AG04449 (cell line): ENCODE measurements at regions of chr19 and their contacts with region 1.

Region 1: DNA sequence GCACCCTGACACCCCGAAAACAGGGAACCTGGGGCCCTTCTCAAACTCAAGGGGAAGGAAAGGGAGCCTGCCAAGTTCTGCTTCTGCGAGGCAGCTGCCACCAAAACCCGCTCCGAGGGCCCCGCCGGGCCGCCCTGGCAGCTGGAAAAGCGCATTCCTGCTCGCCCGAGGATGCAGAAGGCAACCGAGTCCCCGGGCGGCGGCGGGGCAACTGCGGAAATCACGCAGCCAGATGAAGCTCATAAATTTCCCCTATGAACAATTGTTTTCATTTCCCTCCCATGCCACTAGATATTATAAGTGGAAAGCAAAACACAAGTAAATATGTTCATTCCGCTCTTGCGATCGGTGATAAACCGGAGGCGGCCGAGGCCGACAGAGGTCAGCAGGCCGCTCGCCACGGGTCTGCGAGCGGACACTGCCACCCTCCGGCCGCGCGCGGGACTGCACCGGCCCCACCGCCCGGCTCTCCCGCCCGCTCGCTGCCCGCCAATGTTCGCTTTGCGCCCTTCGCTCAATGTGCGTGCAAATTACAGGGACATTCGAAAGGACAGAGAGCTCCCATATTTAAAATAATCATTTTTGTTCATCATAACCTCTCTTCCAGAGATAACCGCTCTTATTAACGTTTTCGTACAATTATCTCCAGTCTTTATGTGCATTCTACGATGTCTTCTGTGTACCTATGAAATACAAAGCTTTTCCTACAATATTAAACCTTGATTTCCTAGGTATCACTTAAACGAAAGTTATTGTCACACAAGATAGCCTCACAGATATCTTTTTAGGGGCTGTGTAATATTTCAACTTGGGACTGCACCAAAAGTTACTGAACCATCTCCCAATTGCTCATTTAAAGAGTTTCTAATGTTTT is 120.8 kb upstream of the ZNF507 start:
- DNase-seq: no peak
- H3K4me3 ChIP-seq: peak overlapping the region; percentile 32
- CTCF ChIP-seq: peak; percentile 87

Region 2: DNA sequence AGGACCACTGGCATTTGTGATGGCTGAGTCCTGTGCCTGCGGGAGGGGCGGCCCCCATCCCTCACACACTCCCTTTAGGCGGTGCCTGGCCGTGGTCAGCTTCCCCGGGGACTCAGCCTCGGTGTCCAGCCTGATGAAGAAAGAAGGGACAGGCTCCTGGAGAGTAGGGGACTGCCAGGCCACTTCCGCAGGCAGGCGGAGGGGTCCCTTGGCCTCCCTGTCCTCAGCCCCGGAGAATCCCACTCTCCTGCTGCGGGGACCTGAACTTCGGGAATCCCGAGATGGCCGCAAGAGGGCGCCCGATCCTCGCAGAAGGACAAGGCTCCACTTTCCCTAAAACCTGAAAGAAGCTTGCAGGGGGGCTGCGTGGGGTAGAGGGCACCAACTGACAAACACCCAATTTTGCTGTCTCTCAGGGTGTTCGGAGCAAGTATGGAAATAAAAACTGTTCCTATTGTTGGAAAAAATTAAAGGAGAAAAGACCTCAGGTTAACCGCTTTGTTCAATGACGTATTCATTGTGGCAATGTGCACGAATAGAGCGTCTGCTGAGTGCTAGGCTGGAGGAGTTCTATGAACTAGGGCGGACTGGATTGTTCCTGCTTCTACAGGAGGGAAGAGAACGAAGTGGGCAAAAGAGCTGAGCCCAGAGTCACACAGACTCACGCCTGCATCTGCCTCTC is 1555.1 kb before region 1 on chr19:
- CTCF ChIA-PET with region 1: interaction called, 75 read pairs
- POLR2A ChIA-PET with region 1: no interaction called
- DNase-seq: no peak
- H3K4me3 ChIP-seq: no peak overlapping the region
- CTCF ChIP-seq: peak; percentile 87

Region 3: DNA sequence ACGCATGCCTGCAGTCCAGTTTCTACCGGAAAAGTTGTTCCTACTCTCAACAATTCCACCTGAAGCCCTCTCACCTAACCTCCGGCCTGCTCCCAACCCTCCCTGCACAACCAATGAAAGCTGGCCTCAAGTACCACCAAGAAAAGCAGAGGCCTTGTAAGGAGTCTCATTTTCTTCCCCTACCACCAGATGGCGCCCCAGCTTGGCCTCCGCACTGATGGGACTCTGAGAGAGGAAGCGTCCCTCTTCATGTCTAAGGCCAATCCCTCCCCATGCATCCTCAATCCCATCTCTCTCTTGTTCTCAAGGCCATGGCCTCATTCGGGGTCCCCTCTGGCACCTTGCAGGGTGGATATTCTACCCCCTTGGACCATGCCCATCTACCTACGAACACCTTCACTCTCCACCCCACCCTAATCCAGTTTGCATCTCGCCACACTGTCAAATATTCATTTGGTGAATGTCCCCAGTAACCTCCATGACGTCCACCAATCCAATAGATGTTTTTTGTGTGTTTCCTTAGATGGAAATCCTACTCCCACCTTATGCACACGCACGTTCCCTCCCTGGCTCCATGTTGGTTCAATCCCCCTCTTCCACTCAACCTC is 1439.7 kb before region 1 on chr19:
- CTCF ChIA-PET with region 1: interaction called, 26 read pairs
- POLR2A ChIA-PET with region 1: no interaction called
- DNase-seq: no peak
- H3K4me3 ChIP-seq: no peak overlapping the region
- CTCF ChIP-seq: peak; percentile 72

Region 4: DNA sequence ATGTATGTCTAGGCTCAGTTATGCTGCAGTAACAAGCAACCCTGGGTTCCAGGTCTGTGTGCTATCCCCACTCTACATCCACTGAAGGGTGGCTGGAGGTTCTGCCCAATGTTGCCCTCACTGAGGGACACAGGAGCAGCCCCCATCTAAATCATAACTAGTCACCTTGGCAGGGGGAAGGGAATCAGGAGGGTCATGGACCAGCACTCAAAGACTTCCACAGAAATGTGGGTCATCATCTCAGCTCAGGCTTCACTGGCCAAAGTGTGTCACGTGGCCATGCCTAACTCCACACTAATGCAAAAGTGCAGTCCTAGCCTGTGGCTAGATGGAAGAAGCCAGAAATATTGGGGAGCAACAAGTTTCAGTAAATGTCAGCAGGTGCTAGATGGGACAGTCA is 16.5 kb before region 1 on chr19:
- CTCF ChIA-PET with region 1: interaction called, 14 read pairs
- POLR2A ChIA-PET with region 1: no interaction called
- DNase-seq: no peak
- H3K4me3 ChIP-seq: no peak overlapping the region
- CTCF ChIP-seq: no peak